ENCODE measurements at regions of chr6 and their contacts with region 1.

Region 1: GRCh38 chr6:159008656-159009288 is 8.8 kb upstream of the RSPH3 start:
- DNase-seq: peak in 4 of 14 experiments; percentile 22 to 79 (median 77)
- ATAC-seq: peak; percentile 83
- H3K4me3 ChIP-seq: peak overlapping the region; percentile 23
- H3K4me3 Mint-ChIP-seq: peak overlapping the region; percentile 39
- H3K27ac ChIP-seq: no peak overlapping the region
- H3K27ac Mint-ChIP-seq: no peak overlapping the region
- H3K4me1 ChIP-seq: peaks cover 29% of the 10 kb centered on the region
- H3K4me1 Mint-ChIP-seq: peaks cover 47% of the 10 kb centered on the region
- H3K27me3 ChIP-seq: no peaks in the 10 kb centered on the region
- H3K27me3 Mint-ChIP-seq: no peaks in the 10 kb centered on the region
- CTCF ChIP-seq: peak; percentile 85

Region 2: GRCh38 chr6:159110013-159110412 is 101.2 kb after region 1 on chr6:
- CTCF ChIA-PET with region 1: interaction called, 42 read pairs
- POLR2A ChIA-PET with region 1: interaction called, 27 read pairs
- intact Hi-C with region 1: no loop called
- DNase-seq: peak in 4 of 14 experiments; percentile 58 to 78 (median 70)
- ATAC-seq: no peak
- H3K4me3 ChIP-seq: no peak overlapping the region
- H3K4me3 Mint-ChIP-seq: peak overlapping the region; percentile 16
- H3K27ac ChIP-seq: peak overlapping the region in 1 of 2 donors; percentile 80
- H3K27ac Mint-ChIP-seq: peak overlapping the region; percentile 88
- H3K4me1 ChIP-seq: peaks cover 85% of the 10 kb centered on the region
- H3K4me1 Mint-ChIP-seq: peaks cover 58% of the 10 kb centered on the region
- H3K27me3 ChIP-seq: no peaks in the 10 kb centered on the region
- H3K27me3 Mint-ChIP-seq: no peaks in the 10 kb centered on the region
- CTCF ChIP-seq: peak; percentile 75

Region 3: DNA sequence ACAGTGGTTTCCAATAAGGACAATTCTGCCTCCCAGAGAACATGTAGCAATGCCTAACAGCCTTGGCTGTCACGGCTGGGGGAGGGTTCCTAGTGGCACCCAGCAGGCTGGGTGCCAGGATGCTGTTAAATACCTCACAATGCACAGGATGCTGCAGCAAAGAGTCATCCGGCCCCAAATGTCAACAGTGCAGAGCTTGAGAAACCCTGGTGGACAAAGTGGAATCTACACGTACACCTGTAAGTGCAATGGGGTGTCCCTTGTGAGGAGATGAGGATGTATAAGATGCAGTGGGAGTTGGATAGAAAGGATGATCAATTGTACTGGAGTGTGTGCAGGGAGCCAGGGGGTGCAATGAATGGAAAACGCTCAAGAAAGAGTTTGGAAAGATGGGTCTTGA is 302.8 kb after region 1 on chr6:
- CTCF ChIA-PET with region 1: no interaction called
- POLR2A ChIA-PET with region 1: no interaction called
- intact Hi-C with region 1: no loop called
- DNase-seq: no peak
- ATAC-seq: no peak
- H3K4me3 ChIP-seq: no peak overlapping the region
- H3K4me3 Mint-ChIP-seq: no peak overlapping the region
- H3K27ac ChIP-seq: no peak overlapping the region
- H3K27ac Mint-ChIP-seq: no peak overlapping the region
- H3K4me1 ChIP-seq: no peaks in the 10 kb centered on the region
- H3K4me1 Mint-ChIP-seq: no peaks in the 10 kb centered on the region
- H3K27me3 ChIP-seq: no peaks in the 10 kb centered on the region
- H3K27me3 Mint-ChIP-seq: peaks cover 6% of the 10 kb centered on the region
- CTCF ChIP-seq: no peak

Measured in CD4-positive, alpha-beta T cell (primary cell).